ENCODE measurements at regions of chr1 and their contacts with region 1.

Region 1: GRCh38 chr1:167491586-167492461 is 26.5 kb downstream of the CD247 start:
- DNase-seq: peak in 5 of 9 experiments; percentile 22 to 80 (median 53)
- ATAC-seq: peak; percentile 17
- H3K4me3 ChIP-seq: peak overlapping the region in 1 of 2 experiments; percentile 18
- H3K4me3 Mint-ChIP-seq: peak overlapping the region; percentile 68
- H3K27ac ChIP-seq: peak overlapping the region; percentile 30 to 86
- H3K27ac Mint-ChIP-seq: peak overlapping the region; percentile 95
- H3K4me1 ChIP-seq: peaks cover 95% of the 10 kb centered on the region
- H3K4me1 Mint-ChIP-seq: peaks cover 90% of the 10 kb centered on the region
- H3K27me3 ChIP-seq: no peaks in the 10 kb centered on the region
- H3K27me3 Mint-ChIP-seq: no peaks in the 10 kb centered on the region
- CTCF ChIP-seq: no peak

Region 2: DNA sequence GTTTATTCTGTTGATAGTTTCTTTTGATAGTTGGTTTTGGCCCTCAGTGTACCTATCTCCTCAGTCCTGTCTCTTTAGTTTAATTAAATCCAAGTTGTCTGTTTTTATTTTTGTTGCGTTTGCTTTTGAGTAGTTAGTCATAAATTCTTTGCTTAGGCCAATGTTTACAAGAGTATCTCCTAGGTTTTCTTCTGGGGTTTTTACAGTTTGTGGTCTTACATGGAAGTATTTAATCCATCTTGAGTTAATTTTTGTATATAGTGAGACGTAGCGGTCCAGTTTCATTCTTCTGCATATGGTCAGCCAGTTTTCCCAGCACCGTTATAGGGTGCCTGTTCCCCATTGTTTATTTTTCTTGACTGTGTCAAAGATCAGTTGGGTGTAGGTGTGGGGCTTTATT is 131.7 kb before region 1 on chr1:
- CTCF ChIA-PET with region 1: no interaction called
- POLR2A ChIA-PET with region 1: no interaction called
- intact Hi-C with region 1: no loop called
- DNase-seq: no peak
- ATAC-seq: no peak
- H3K4me3 ChIP-seq: no peak overlapping the region
- H3K4me3 Mint-ChIP-seq: no peak overlapping the region
- H3K27ac ChIP-seq: no peak overlapping the region
- H3K27ac Mint-ChIP-seq: no peak overlapping the region
- H3K4me1 ChIP-seq: no peaks in the 10 kb centered on the region
- H3K4me1 Mint-ChIP-seq: peaks cover 14% of the 10 kb centered on the region
- H3K27me3 ChIP-seq: no peaks in the 10 kb centered on the region
- H3K27me3 Mint-ChIP-seq: no peaks in the 10 kb centered on the region
- CTCF ChIP-seq: no peak

Region 3: DNA sequence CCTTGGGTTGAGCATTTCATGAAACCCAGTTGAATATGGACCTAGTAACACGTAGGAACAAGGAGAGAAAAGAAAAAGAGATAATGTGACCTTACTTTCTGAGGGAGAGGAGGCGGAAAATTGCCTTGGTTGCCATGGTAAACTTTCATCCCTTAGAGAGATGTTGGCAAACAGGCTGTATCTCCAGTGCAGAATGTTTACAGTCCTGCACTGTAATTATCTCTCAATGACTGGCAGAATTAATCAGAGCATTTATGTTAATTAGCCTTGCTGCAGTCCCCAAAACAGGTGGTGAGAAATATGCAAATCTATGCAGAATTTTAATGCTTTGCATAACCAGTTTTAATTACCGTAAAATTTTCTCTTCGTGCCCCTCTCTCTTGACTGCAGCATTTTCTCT is 120.8 kb before region 1 on chr1:
- CTCF ChIA-PET with region 1: no interaction called
- POLR2A ChIA-PET with region 1: no interaction called
- intact Hi-C with region 1: no loop called
- DNase-seq: no peak
- ATAC-seq: no peak
- H3K4me3 ChIP-seq: no peak overlapping the region
- H3K4me3 Mint-ChIP-seq: no peak overlapping the region
- H3K27ac ChIP-seq: no peak overlapping the region
- H3K27ac Mint-ChIP-seq: no peak overlapping the region
- H3K4me1 ChIP-seq: no peaks in the 10 kb centered on the region
- H3K4me1 Mint-ChIP-seq: no peaks in the 10 kb centered on the region
- H3K27me3 ChIP-seq: no peaks in the 10 kb centered on the region
- H3K27me3 Mint-ChIP-seq: no peaks in the 10 kb centered on the region
- CTCF ChIP-seq: no peak

Region 4: DNA sequence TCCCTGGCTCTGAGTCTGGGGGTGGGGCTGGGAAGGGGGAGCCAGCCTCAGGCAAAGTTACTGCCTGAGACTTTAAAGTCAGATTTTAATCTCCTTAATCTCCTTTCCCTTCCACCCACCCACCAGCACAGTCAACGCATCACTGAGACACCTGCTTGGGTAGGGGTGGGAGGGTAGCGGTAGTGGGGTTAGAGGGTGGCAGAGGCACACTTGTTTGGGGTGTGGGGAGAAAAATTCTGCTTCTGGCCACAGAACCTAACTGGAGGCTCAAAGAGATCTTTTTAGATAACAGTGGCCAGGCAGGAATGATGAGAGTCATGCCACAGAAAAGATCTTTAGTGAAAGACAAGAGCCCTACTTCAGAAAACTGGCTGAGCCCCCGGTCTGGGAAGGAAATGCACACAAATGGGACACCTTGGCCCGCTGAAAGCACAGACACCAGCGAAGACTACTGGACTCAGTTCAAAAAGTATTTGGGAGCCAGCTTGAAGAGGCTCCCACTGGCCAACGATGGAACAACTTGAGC is 17.6 kb before region 1 on chr1:
- CTCF ChIA-PET with region 1: interaction called, 4 read pairs
- POLR2A ChIA-PET with region 1: interaction called, 4 read pairs
- intact Hi-C with region 1: loop called in 1 of 2 experiments (anchors 2 kb)
- DNase-seq: peak in 6 of 9 experiments; percentile 43 to 76 (median 60)
- ATAC-seq: peak; percentile 82
- H3K4me3 ChIP-seq: peak overlapping the region; percentile 5 to 15
- H3K4me3 Mint-ChIP-seq: peak overlapping the region; percentile 78
- H3K27ac ChIP-seq: peak overlapping the region in 1 of 2 experiments; percentile 76
- H3K27ac Mint-ChIP-seq: peak overlapping the region; percentile 91
- H3K4me1 ChIP-seq: peaks cover 72% of the 10 kb centered on the region
- H3K4me1 Mint-ChIP-seq: peaks cover 91% of the 10 kb centered on the region
- H3K27me3 ChIP-seq: no peaks in the 10 kb centered on the region
- H3K27me3 Mint-ChIP-seq: no peaks in the 10 kb centered on the region
- CTCF ChIP-seq: no peak

Region 5: DNA sequence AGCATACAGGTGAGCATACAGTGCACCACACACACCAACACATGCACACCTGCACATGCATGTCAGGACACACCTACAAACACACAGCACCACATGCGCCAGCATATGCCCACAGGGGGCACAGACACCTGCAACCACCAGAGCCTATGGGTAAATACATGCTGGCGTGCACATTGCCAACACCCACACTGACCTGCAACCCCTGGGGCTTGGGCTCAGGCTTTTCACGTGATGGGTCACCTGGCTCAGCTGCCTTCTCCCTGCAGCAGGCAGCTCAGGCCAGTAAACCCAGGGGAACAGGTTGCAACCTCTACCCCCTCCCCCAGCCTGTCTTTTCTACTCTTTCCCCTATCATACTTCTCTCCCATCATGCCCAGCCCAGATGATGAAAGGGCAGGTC is 18.4 kb after region 1 on chr1:
- CTCF ChIA-PET with region 1: interaction called, 7 read pairs
- POLR2A ChIA-PET with region 1: interaction called, 12 read pairs
- intact Hi-C with region 1: loop called in 1 of 2 experiments (anchors 2 kb)
- DNase-seq: peak in 2 of 9 experiments; percentile 42 to 49
- ATAC-seq: peak; percentile 16
- H3K4me3 ChIP-seq: no peak overlapping the region
- H3K4me3 Mint-ChIP-seq: peak overlapping the region; percentile 78
- H3K27ac ChIP-seq: peak overlapping the region in 1 of 2 experiments; percentile 45
- H3K27ac Mint-ChIP-seq: peak overlapping the region; percentile 85
- H3K4me1 ChIP-seq: peaks cover 77% of the 10 kb centered on the region
- H3K4me1 Mint-ChIP-seq: peaks cover 90% of the 10 kb centered on the region
- H3K27me3 ChIP-seq: no peaks in the 10 kb centered on the region
- H3K27me3 Mint-ChIP-seq: no peaks in the 10 kb centered on the region
- CTCF ChIP-seq: no peak